Posterior vena cava (tissue), 2 donors: ENCODE measurements at regions of chr6 and their contacts with region 1.

Region 1: DNA sequence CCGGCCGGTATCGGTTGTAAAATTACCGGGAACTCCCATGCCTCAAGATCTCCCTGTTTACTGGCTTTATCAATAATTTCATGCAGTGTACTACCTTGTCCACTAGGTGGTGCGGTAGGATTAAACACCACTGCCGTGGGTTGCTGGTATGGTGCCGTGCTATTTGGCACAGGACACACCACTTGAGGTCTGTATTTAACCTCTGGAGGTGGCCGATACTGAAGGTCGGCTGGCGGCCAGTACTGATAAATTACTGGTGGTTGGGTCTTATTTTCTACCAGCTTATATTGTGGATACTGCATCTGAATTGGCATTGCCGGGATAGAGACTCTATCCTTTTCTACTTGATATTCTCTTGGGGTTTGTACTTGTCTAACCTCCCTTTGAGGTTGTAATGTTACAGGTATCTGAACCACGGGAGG is 14.3 kb upstream of the PTCRA start:
- DNase-seq: peak; percentile 84

Region 2: DNA sequence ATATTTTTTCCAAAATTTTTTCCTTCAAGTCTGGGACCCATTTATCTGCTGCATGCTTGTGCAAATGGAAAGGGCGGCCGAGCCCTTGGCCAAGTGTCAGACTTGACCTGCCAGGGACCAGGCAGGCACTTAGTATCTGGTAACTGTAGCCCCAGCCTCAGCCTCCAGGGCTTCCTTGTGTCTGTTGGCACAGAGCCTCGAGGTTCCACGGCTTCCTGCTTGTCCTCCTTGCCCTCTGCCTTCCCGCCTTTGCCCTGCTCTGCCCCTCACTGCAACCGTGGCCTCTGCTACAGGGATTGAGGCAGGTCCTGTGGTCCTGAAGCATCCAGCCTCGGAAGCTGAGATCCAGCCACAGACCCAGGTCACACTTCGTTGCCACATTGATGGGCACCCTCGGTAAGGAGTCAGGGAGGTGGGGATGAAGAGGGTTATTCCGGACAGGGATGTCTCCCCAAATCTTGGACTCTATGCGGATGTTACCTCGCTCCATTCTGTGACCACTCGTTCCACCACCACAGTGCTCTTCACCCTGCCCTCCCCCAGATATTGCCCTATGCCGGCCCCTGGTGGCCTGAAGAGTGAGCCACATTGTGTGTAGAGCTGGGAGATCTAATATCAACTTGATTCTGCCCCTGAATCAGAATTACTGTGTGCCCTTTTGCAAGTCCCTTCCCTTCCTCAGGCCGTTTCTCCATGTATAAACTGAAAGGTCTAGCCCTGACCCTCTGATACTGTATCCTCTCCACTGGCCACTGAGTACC is 228.1 kb after region 1 on chr6:
- intact Hi-C with region 1: loop called in 1 of 2 experiments (anchors 5 kb)
- DNase-seq: no peak

Region 3: DNA sequence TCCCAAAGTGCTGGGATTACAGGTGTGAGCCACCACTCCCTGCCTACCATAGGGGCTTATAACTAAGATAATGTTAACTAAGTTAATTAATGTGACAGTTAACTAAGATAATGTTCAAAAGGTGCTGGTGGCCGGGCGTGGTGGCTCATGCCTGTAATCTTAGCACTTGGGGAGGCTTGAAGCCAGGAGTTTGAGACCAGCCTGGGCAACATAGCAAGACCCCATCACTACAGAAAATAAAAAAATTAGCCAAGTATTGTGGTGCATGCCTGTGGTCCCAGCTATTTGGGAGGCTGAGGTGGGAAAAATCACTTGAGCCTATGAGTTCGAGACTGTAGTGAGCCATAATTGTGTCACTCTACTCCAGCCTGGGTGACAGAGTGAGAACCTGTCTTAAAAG is 236.7 kb after region 1 on chr6:
- intact Hi-C with region 1: loop called (anchors 1 to 5 kb)
- DNase-seq: no peak

Region 4: GRCh38 chr6:43143235-43144124 is 241.9 kb after region 1 on chr6:
- intact Hi-C with region 1: loop called (anchors 1 to 5 kb)
- DNase-seq: peak; percentile 95

Region 5: DNA sequence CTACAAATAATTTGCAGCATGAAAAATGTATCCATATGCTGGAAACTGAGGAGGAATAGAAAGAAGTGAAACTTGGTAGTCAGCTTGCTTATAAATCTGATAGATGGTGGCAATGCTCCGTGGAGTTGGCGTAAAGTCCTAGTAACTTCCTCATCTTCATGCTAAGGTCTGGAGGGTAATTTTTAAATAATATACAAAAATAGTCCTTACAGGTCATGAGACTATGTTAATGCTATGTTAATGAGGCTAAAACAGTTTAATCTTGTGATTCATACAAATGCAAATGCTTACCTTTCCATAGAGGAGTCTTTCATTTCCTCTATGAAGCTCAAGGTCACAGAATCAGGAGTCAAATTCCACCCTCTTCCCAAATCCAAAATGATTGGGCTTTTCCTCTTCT is 416.5 kb after region 1 on chr6:
- intact Hi-C with region 1: no loop called
- DNase-seq: no peak